Activated B cell treated with CpG ODN at 0.5 μM for 24 hours (primary cell): ENCODE measurements at regions of chr16 and their contacts with region 1.

Region 1: GRCh38 chr16:67246934-67247697 is at the start of gene FHOD1:
- DNase-seq: peak; percentile 100
- ATAC-seq: peak; percentile 70
- H3K4me3 Mint-ChIP-seq: peak within 1 kb of the TSS; percentile 85
- H3K27ac Mint-ChIP-seq: peak within 1 kb of the TSS; percentile 80
- H3K4me1 Mint-ChIP-seq: peaks cover 50% of the 10 kb centered on the region
- H3K27me3 Mint-ChIP-seq: peaks cover 2% of the 10 kb centered on the region
- CTCF ChIP-seq: no peak
- total RNA-seq, gene FHOD1: 45.5 and 50.4 TPM in 2 replicates

Region 2: GRCh38 chr16:66880288-66881013 is 366.7 kb before region 1 on chr16 and contains the start of gene PDP2:
- CTCF ChIA-PET with region 1: no interaction called
- POLR2A ChIA-PET with region 1: no interaction called
- intact Hi-C with region 1: loop called (anchors 1 kb)
- DNase-seq: peak; percentile 81
- ATAC-seq: peak; percentile 99
- H3K4me3 Mint-ChIP-seq: peak within 1 kb of the TSS; percentile 99
- H3K27ac Mint-ChIP-seq: peak within 1 kb of the TSS; percentile 86
- H3K4me1 Mint-ChIP-seq: peaks cover 12% of the 10 kb centered on the region
- H3K27me3 Mint-ChIP-seq: no peaks in the 10 kb centered on the region
- CTCF ChIP-seq: no peak
- total RNA-seq, gene PDP2: 13.0 and 13.2 TPM in 2 replicates

Region 3: GRCh38 chr16:67183627-67184328 is 63.3 kb before region 1 on chr16 and contains the start of gene MATCAP1:
- CTCF ChIA-PET with region 1: no interaction called
- POLR2A ChIA-PET with region 1: no interaction called
- intact Hi-C with region 1: loop called (anchors 1 kb)
- DNase-seq: peak; percentile 94
- ATAC-seq: peak; percentile 96
- H3K4me3 Mint-ChIP-seq: peak within 1 kb of the TSS; percentile 85
- H3K27ac Mint-ChIP-seq: no peak within 1 kb of the TSS
- H3K4me1 Mint-ChIP-seq: peaks cover 14% of the 10 kb centered on the region
- H3K27me3 Mint-ChIP-seq: peaks cover 12% of the 10 kb centered on the region
- CTCF ChIP-seq: no peak
- total RNA-seq, gene MATCAP1: 10.6 and 18.7 TPM in 2 replicates

Region 4: DNA sequence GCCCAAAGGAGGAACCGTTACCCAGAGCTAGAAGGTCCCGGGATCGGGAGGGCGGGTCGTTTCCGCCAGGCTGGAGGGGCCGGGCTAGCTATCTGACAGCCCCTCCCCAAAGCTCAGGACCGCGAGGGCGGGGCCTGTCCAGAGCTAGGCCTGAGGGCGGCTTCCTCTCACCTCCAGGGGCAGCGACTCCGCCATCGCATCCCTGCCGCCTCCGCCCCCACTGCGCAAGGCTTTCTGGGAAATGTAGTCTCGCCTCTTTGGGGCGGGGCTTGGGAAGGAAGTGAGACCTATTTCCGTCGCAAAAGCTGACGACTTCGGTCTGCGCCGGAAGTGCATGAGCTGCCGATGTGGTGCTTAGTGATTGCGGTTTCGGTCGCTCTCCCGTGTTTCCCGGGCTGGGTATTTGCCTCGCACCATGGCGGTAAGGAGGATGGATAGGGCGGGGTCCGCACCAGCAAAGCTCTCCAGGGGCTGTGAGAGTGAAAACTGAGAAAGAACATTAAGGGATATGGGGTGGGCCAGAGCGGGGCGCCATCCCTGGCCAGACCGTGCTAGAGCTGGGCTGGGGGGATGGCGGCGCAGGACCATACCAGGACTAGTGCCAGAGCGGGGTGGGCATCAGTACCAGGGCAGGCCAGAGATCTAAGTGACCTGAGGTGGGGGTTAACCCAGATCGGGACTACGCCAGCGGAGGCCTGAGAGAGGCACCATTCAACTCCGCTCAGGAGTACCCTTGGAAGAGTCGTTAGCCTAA is 20.1 kb before region 1 on chr16 and contains the start of gene TMEM208:
- CTCF ChIA-PET with region 1: interaction called, 12 read pairs
- POLR2A ChIA-PET with region 1: interaction called, 120 read pairs
- intact Hi-C with region 1: loop called (anchors 1 kb)
- DNase-seq: peak; percentile 98
- ATAC-seq: peak; percentile 98
- H3K4me3 Mint-ChIP-seq: peak within 1 kb of the TSS; percentile 100
- H3K27ac Mint-ChIP-seq: peak within 1 kb of the TSS; percentile 99
- H3K4me1 Mint-ChIP-seq: peaks cover 27% of the 10 kb centered on the region
- H3K27me3 Mint-ChIP-seq: no peaks in the 10 kb centered on the region
- CTCF ChIP-seq: no peak
- total RNA-seq, gene TMEM208: 37.1 and 41.3 TPM in 2 replicates

Region 5: GRCh38 chr16:67660564-67661028 is 413.5 kb after region 1 on chr16 and contains the start of gene PARD6A:
- CTCF ChIA-PET with region 1: no interaction called
- POLR2A ChIA-PET with region 1: interaction called, 3 read pairs
- intact Hi-C with region 1: loop called (anchors 5 kb)
- DNase-seq: peak; percentile 87
- ATAC-seq: peak; percentile 80
- H3K4me3 Mint-ChIP-seq: peak within 1 kb of the TSS; percentile 94
- H3K27ac Mint-ChIP-seq: peak within 1 kb of the TSS; percentile 94
- H3K4me1 Mint-ChIP-seq: peaks cover 28% of the 10 kb centered on the region
- H3K27me3 Mint-ChIP-seq: no peaks in the 10 kb centered on the region
- CTCF ChIP-seq: no peak
- total RNA-seq, gene PARD6A: 5.9 and 6.0 TPM in 2 replicates

Region 6: GRCh38 chr16:68085259-68086071 is 838.3 kb after region 1 on chr16 and contains the start of gene NFATC3:
- CTCF ChIA-PET with region 1: no interaction called
- POLR2A ChIA-PET with region 1: no interaction called
- intact Hi-C with region 1: loop called (anchors 2 kb)
- DNase-seq: peak; percentile 96
- ATAC-seq: peak; percentile 78
- H3K4me3 Mint-ChIP-seq: peak within 1 kb of the TSS; percentile 98
- H3K27ac Mint-ChIP-seq: peak within 1 kb of the TSS; percentile 97
- H3K4me1 Mint-ChIP-seq: peaks cover 77% of the 10 kb centered on the region
- H3K27me3 Mint-ChIP-seq: no peaks in the 10 kb centered on the region
- CTCF ChIP-seq: no peak
- total RNA-seq, gene NFATC3: 64.8 and 72.0 TPM in 2 replicates